HCT116 (cell line): ENCODE measurements at regions of chr12 and their contacts with region 1.

Region 1: DNA sequence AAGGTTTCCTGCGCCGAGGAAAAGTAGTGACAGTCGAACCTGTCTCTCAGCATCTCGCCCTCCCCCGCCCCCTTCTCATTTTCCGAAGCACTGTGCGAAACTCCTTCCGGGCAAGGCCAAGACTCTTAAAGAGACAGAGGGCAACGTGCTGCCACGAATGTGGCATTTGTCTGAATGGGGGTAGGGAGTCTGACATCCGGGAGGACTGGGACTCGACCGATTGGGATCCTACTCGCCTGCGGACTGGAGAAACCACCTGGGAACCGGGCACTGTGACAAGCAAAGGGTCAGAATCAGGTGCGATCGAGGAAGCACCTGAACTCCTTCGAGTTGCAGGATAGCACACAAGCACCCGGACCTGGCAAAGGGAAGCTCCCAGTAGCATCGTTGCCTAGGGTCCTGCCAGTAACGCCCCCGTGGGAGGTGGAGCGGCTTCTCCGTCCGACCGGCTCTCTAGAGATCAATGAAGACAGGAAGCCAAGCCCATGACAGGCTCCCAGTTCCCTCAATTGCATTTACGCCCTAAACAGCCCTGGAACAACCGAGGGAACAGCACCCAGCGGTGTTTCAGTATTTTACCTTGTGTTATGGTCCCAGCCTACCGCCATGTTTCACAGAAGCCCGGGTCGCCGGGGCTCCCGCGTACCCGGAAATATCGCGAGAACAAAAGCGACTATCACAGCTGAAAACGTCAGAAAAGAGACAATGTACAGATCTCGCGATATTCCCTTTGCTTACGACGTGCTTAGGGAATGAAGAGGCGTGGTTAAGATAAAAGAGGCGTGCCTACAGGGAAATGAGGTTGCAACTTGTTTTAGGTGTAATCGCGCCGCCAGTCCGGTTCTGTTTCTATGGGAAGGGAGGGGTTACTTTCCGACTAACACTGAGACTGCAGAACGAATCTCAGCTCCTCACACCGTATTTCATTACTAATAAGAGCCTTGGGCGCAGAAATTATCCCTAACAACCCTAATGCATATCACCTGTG is at the start of gene ERGIC2:
- DNase-seq: peak; percentile 99
- ATAC-seq: peak; percentile 97
- H3K4me3 ChIP-seq: peak within 1 kb of the TSS; percentile 92 to 98
- H3K27ac ChIP-seq: peak within 1 kb of the TSS; percentile 82
- H3K4me1 ChIP-seq: peaks cover 4 to 17% of the 10 kb centered on the region in 2 experiments; a peak in 3 of 4 replicates
- H3K27me3 ChIP-seq: no peaks in the 10 kb centered on the region
- CTCF ChIP-seq: no peak
- POLR2A ChIP-seq: peak; percentile 68
- RAD21 ChIP-seq: no peak
- total RNA-seq, gene ERGIC2: 71.1 TPM

Region 2: GRCh38 chr12:29427964-29428363 is 47.1 kb after region 1 on chr12:
- CTCF ChIA-PET with region 1: no interaction called
- POLR2A ChIA-PET with region 1: no interaction called
- RAD21 ChIA-PET with region 1: no interaction called
- intact Hi-C with region 1: loop called (anchors 1 kb)
- DNase-seq: peak; percentile 36
- ATAC-seq: peak; percentile 95
- H3K4me3 ChIP-seq: no peak overlapping the region
- H3K27ac ChIP-seq: no peak overlapping the region
- H3K4me1 ChIP-seq: peaks cover 4 to 16% of the 10 kb centered on the region in 2 experiments; a peak in 3 of 4 replicates
- H3K27me3 ChIP-seq: no peaks in the 10 kb centered on the region
- CTCF ChIP-seq: peak in 2 of 3 experiments; percentile 43 to 50; a peak in 3 of 6 replicates
- POLR2A ChIP-seq: no peak
- RAD21 ChIP-seq: no peak

Region 3: DNA sequence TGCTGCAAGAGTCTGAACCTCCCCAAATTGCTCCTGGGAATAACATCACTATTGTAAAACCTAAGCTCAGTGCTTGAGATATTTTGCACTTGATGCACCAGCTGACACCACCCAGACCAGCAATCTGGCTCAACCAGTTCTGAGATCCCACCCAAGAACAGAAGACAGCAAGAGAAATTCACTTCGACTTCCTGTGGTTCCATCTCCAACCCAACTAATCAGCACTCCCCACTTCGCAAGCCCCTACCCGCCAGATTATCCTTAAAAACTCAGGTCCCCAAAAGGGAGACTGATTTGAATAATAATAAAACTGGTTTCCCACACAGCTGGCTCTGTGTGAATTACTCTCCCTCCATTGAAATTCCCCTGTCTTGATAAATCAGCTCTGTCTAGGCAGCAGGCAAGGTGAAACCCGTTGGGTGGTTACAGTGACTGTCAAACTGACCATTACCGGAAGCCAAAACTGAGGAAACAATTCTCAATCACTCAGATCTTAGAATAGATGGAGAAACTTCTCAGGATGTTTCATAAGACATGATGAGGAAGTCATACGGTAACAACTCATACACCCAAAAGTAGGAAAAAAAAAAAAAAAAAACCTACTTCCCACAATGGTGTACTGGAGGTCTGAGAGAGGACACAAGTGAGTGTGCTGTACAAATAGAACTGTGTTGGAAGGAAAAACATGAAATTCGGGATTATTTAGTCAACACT is 310.5 kb after region 1 on chr12:
- CTCF ChIA-PET with region 1: no interaction called
- POLR2A ChIA-PET with region 1: no interaction called
- RAD21 ChIA-PET with region 1: no interaction called
- intact Hi-C with region 1: no loop called
- DNase-seq: no peak
- ATAC-seq: no peak
- H3K4me3 ChIP-seq: no peak overlapping the region
- H3K27ac ChIP-seq: no peak overlapping the region
- H3K4me1 ChIP-seq: no peaks in the 10 kb centered on the region
- H3K27me3 ChIP-seq: no peaks in the 10 kb centered on the region
- CTCF ChIP-seq: no peak
- POLR2A ChIP-seq: no peak
- RAD21 ChIP-seq: no peak